ENCODE measurements at regions of chr21 and their contacts with region 1.

Region 1: GRCh38 chr21:37563641-37564340 is 197.2 kb downstream of the DYRK1A start:
- DNase-seq: peak; percentile 82 to 89
- H3K4me3 ChIP-seq: peak overlapping the region; percentile 65
- H3K27ac ChIP-seq: peak overlapping the region; percentile 99
- H3K4me1 ChIP-seq: peaks cover 14% of the 10 kb centered on the region
- H3K27me3 ChIP-seq: no peaks in the 10 kb centered on the region
- CTCF ChIP-seq: peak; percentile 14; the same call in 1 of the 2 replicates

Region 2: GRCh38 chr21:37199057-37199924 is 364.5 kb before region 1 on chr21:
- CTCF ChIA-PET with region 1: no interaction called
- POLR2A ChIA-PET with region 1: no interaction called
- intact Hi-C with region 1: no loop called
- DNase-seq: peak; percentile 35 to 55
- H3K4me3 ChIP-seq: no peak overlapping the region
- H3K27ac ChIP-seq: no peak overlapping the region
- H3K4me1 ChIP-seq: no peaks in the 10 kb centered on the region
- H3K27me3 ChIP-seq: no peaks in the 10 kb centered on the region
- CTCF ChIP-seq: no peak

Region 3: DNA sequence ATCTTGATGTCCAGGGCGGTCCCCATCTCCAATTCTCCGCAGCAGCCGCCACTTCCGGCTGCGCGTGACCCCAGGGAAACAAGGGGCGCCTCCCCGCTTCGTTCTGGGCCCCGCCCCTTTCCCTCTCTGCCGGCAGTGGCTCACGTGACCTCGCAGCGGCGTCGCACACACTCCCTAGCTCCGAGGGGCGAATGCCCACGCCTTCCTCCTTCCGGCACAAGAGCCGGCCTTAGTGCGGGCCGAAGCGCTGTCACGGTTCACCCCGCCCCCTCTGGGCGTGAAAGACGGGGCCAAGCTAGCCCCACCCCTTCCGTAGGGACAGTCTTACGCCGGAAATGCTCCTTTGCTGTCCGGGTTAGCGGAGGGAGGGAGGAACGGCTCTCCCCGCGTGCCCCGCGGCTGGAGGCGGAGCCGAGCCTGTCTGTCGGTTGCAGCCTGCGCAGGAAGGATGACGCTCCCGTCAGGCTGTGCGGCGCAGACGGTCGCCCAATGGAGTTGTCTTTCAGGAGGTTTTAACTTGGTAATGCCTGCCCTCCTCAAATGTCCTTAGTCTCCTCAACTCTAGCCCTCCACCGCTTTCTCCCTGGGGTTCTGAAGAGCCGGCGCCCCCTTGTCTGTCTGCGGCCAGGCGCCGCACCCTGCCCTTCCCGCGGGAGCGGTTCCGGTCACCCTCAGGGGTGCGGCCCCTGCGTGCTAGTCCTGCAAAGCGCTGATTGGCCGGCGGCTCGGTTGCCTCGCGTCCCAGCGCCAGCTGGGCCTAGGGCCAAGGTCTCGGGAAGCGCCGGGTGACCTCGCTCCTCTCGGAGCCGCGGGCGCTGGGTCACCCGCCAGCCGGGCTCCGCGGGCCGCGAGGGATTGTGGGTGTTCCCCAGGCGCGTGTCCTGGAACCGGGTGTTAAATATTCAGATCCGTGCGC is 296.3 kb before region 1 on chr21 and contains the start of gene VPS26C:
- CTCF ChIA-PET with region 1: no interaction called
- POLR2A ChIA-PET with region 1: interaction called, 3 read pairs
- intact Hi-C with region 1: loop called (anchors 2 kb)
- DNase-seq: peak; percentile 94 to 97
- H3K4me3 ChIP-seq: peak within 1 kb of the TSS; percentile 82
- H3K27ac ChIP-seq: peak within 1 kb of the TSS; percentile 92
- H3K4me1 ChIP-seq: peaks cover 20% of the 10 kb centered on the region
- H3K27me3 ChIP-seq: no peaks in the 10 kb centered on the region
- CTCF ChIP-seq: no peak
- total RNA-seq, gene VPS26C: 32.2 and 46.2 TPM in 2 replicates

Region 4: GRCh38 chr21:37366482-37367316 is 197.1 kb before region 1 on chr21 and contains the start of gene DYRK1A:
- CTCF ChIA-PET with region 1: no interaction called
- POLR2A ChIA-PET with region 1: interaction called, 4 read pairs
- intact Hi-C with region 1: loop called (anchors 1 kb)
- DNase-seq: peak; percentile 91 to 95
- H3K4me3 ChIP-seq: peak within 1 kb of the TSS; percentile 78
- H3K27ac ChIP-seq: peak within 1 kb of the TSS; percentile 97
- H3K4me1 ChIP-seq: peaks cover 37% of the 10 kb centered on the region
- H3K27me3 ChIP-seq: no peaks in the 10 kb centered on the region
- CTCF ChIP-seq: no peak
- total RNA-seq, gene DYRK1A: 33.7 and 35.5 TPM in 2 replicates

Region 5: GRCh38 chr21:37658817-37659458 is 95.1 kb after region 1 on chr21:
- CTCF ChIA-PET with region 1: no interaction called
- POLR2A ChIA-PET with region 1: no interaction called
- intact Hi-C with region 1: loop called (anchors 1 kb)
- DNase-seq: peak; percentile 73 to 91
- H3K4me3 ChIP-seq: no peak overlapping the region
- H3K27ac ChIP-seq: peak overlapping the region; percentile 84
- H3K4me1 ChIP-seq: peaks cover 28% of the 10 kb centered on the region
- H3K27me3 ChIP-seq: no peaks in the 10 kb centered on the region
- CTCF ChIP-seq: no peak; the same call in 1 of the 2 replicates

Region 6: GRCh38 chr21:37682966-37683365 is 119.2 kb after region 1 on chr21:
- CTCF ChIA-PET with region 1: no interaction called
- POLR2A ChIA-PET with region 1: no interaction called
- intact Hi-C with region 1: no loop called
- DNase-seq: no peak
- H3K4me3 ChIP-seq: no peak overlapping the region
- H3K27ac ChIP-seq: no peak overlapping the region
- H3K4me1 ChIP-seq: no peaks in the 10 kb centered on the region
- H3K27me3 ChIP-seq: peaks cover 9% of the 10 kb centered on the region; the same call in 1 of the 2 replicates
- CTCF ChIP-seq: no peak